ENCODE measurements at regions of chr20 and their contacts with region 1.

Region 1: GRCh38 chr20:22536956-22537756 is 47.2 kb downstream of the FOXA2 start:
- DNase-seq: peak; percentile 76 to 80
- H3K4me3 ChIP-seq: no peak overlapping the region
- H3K4me3 Mint-ChIP-seq: peak overlapping the region; percentile 55
- H3K27ac Mint-ChIP-seq: peak overlapping the region; percentile 87
- H3K4me1 ChIP-seq: peaks cover 39% of the 10 kb centered on the region
- H3K4me1 Mint-ChIP-seq: peaks cover 40% of the 10 kb centered on the region
- H3K27me3 ChIP-seq: no peaks in the 10 kb centered on the region
- H3K27me3 Mint-ChIP-seq: no peaks in the 10 kb centered on the region
- CTCF ChIP-seq: no peak

Region 2: DNA sequence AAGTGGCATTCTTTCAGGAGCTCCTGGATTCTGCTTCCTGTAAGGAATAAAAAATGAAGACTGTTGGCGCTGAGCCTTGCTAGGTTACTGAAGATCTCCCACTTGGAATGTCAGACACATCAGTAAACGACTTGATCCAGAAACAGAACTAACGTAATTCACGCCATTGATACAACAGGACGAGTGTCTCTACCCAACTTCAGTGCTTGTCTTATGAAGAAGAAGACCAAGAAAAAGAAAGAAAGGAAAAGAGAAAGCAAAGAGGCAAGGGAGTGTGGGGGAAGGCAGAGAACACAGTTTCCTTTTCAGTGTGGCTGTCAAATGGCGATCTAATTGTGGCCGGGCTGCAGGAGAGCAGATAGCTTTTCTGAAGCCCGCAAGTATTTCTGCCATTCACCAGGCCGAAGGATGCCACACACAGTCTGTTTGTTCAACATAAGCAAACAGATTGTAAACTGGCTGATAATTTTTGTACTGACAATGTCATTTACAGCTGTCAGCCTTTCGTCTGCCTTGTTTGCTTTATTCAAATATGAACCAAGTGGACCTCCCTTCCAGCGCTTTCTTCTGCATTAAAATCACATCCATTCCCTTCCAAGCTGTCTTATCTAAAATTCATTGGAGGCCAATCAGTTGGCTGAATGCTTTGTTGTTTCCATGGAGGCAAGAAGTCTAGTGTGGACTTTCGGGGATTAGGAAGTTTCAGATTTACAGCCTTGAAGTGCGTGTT is 133.4 kb before region 1 on chr20:
- CTCF ChIA-PET with region 1: no interaction called
- POLR2A ChIA-PET with region 1: no interaction called
- intact Hi-C with region 1: loop called (anchors 5 kb)
- DNase-seq: peak; percentile 53 to 60
- H3K4me3 ChIP-seq: peak overlapping the region; percentile 24
- H3K4me3 Mint-ChIP-seq: peak overlapping the region; percentile 72
- H3K27ac Mint-ChIP-seq: peak overlapping the region; percentile 39
- H3K4me1 ChIP-seq: peaks cover 15% of the 10 kb centered on the region
- H3K4me1 Mint-ChIP-seq: peaks cover 35% of the 10 kb centered on the region
- H3K27me3 ChIP-seq: no peaks in the 10 kb centered on the region
- H3K27me3 Mint-ChIP-seq: no peaks in the 10 kb centered on the region
- CTCF ChIP-seq: no peak

Region 3: GRCh38 chr20:22475662-22476061 is 61.5 kb before region 1 on chr20:
- CTCF ChIA-PET with region 1: no interaction called
- POLR2A ChIA-PET with region 1: no interaction called
- intact Hi-C with region 1: no loop called
- DNase-seq: no peak
- H3K4me3 ChIP-seq: no peak overlapping the region
- H3K4me3 Mint-ChIP-seq: no peak overlapping the region
- H3K27ac Mint-ChIP-seq: no peak overlapping the region
- H3K4me1 ChIP-seq: peaks cover 10% of the 10 kb centered on the region
- H3K4me1 Mint-ChIP-seq: peaks cover 9% of the 10 kb centered on the region
- H3K27me3 ChIP-seq: no peaks in the 10 kb centered on the region
- H3K27me3 Mint-ChIP-seq: no peaks in the 10 kb centered on the region
- CTCF ChIP-seq: no peak

Region 4: DNA sequence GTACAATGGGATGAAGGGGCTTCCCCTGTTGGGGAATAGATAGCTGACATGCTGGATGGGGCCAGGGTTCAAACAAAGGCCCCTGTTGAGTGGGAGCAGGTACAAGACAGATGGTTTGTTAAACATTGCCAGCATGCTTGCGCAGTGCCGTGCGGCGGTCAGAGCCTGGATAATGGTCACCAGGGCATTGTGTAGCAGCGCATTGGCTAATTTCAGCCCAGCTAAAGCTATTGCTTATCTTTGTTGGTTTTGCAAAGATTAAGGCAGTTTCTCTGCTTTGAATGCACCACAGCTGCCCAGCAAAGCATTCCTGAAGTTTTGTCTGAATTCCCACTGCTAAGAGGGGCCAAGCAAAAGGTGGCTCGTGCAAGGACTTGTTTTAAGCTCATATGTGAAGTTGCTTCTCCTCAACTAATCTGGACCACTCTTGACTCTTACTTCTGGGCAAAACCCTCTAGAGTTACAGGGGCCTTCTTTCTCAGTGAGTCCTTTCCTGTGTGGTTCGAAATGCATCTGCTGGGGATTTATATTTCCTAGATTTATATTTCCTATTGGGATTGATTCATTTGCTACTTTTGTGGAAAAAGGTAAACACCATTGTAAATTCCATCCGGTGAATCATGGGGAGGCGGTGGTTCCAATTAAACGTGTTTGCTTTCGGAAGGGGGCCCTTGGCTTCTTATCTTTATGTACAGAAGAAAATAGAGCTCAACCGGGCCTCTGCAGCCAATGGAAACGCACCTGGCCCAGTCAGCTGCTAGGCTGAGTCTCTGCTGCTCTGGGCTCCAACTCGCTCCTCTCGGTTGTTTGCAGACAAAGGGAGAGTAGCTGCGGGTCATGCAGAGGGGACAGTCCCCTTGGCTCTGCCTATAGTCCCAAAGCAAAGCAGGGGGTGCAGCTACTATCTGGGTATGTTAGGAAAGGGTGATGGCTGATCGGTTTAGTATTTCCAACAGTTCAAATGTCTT is 24.9 kb before region 1 on chr20:
- CTCF ChIA-PET with region 1: no interaction called
- POLR2A ChIA-PET with region 1: no interaction called
- intact Hi-C with region 1: loop called (anchors 1 kb)
- DNase-seq: peak; percentile 92 to 96
- H3K4me3 ChIP-seq: no peak overlapping the region
- H3K4me3 Mint-ChIP-seq: peak overlapping the region; percentile 35
- H3K27ac Mint-ChIP-seq: peak overlapping the region; percentile 50
- H3K4me1 ChIP-seq: peaks cover 71% of the 10 kb centered on the region
- H3K4me1 Mint-ChIP-seq: peaks cover 65% of the 10 kb centered on the region
- H3K27me3 ChIP-seq: no peaks in the 10 kb centered on the region
- H3K27me3 Mint-ChIP-seq: no peaks in the 10 kb centered on the region
- CTCF ChIP-seq: no peak

Region 5: GRCh38 chr20:22523499-22524392 is 13.4 kb before region 1 on chr20:
- CTCF ChIA-PET with region 1: interaction called, 4 read pairs
- POLR2A ChIA-PET with region 1: interaction called, 3 read pairs
- intact Hi-C with region 1: loop called (anchors 1 kb)
- DNase-seq: peak; percentile 90 to 92
- H3K4me3 ChIP-seq: peak overlapping the region; percentile 26
- H3K4me3 Mint-ChIP-seq: peak overlapping the region; percentile 82
- H3K27ac Mint-ChIP-seq: peak overlapping the region; percentile 99
- H3K4me1 ChIP-seq: peaks cover 41% of the 10 kb centered on the region
- H3K4me1 Mint-ChIP-seq: peaks cover 40% of the 10 kb centered on the region
- H3K27me3 ChIP-seq: no peaks in the 10 kb centered on the region
- H3K27me3 Mint-ChIP-seq: no peaks in the 10 kb centered on the region
- CTCF ChIP-seq: no peak

Region 6: GRCh38 chr20:22578221-22579118 is 41.3 kb after region 1 on chr20:
- CTCF ChIA-PET with region 1: no interaction called
- POLR2A ChIA-PET with region 1: no interaction called
- intact Hi-C with region 1: loop called (anchors 5 kb)
- DNase-seq: peak in 1 of 2 experiments; percentile 38
- H3K4me3 ChIP-seq: peak overlapping the region; percentile 23; the same call in 1 of the 2 replicates
- H3K4me3 Mint-ChIP-seq: peak overlapping the region; percentile 78
- H3K27ac Mint-ChIP-seq: peak overlapping the region; percentile 90
- H3K4me1 ChIP-seq: peaks cover 30% of the 10 kb centered on the region
- H3K4me1 Mint-ChIP-seq: peaks cover 33% of the 10 kb centered on the region
- H3K27me3 ChIP-seq: no peaks in the 10 kb centered on the region
- H3K27me3 Mint-ChIP-seq: no peaks in the 10 kb centered on the region
- CTCF ChIP-seq: no peak

Region 7: GRCh38 chr20:22663528-22664025 is 126.4 kb after region 1 on chr20:
- CTCF ChIA-PET with region 1: no interaction called
- POLR2A ChIA-PET with region 1: no interaction called
- intact Hi-C with region 1: no loop called
- DNase-seq: no peak
- H3K4me3 ChIP-seq: no peak overlapping the region
- H3K4me3 Mint-ChIP-seq: no peak overlapping the region
- H3K27ac Mint-ChIP-seq: no peak overlapping the region
- H3K4me1 ChIP-seq: no peaks in the 10 kb centered on the region
- H3K4me1 Mint-ChIP-seq: peaks cover 6% of the 10 kb centered on the region
- H3K27me3 ChIP-seq: no peaks in the 10 kb centered on the region
- H3K27me3 Mint-ChIP-seq: no peaks in the 10 kb centered on the region
- CTCF ChIP-seq: no peak

Measured in Caco-2 (cell line).